Activated CD4-positive, alpha-beta memory T cell treated with anti-CD3 and anti-CD28 coated beads, Interleukin-2, amount 10 ng/mL, durations not matched to agents 7 days and 5 days (primary cell): ENCODE measurements at regions of chr6 and their contacts with region 1.

Region 1: DNA sequence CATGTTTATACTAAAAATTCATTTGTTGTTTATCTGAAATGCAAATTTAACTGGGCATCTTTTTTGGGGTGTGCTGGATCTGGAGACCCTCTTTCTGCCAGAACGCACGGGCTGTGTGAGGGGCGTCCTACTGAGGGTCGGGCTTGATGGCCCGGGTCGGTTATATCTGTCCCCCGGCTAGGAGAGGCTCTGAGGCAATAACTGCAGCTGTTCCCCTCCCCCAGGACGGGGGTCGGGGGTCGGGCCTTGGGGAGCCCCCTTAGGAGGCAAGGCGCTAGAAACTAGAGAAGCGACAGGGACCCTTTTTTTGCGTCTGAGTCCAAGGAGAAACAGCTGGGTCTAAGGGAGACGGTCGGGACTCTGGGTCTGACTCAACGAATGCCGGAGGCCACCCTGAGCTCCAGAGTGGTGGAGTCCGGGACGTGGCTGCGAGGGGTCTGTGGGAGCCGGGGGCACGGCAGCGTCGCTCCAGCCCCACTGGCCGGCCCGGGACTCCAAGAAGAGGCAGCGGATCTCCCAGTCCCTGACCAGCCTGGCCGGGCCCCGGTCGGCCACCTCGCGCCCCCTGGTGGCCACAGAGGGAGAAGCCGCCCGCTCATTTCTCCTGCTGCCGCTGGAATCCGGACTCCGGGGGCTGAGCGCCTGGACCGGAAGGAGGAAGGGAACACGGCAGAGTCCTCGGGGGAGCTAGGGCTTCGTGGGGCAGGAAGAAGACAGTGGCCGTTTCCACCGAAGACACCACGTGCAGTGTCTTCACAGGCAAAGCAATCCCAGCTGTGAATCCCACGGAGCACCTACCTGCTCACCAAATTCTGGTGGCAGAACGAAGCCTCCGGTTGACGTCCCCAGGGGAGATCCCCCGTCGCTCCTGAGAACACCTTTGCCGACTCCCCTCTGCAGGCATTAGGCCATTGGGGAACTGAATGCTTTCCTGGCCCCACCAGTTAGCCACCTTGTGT is 24.0 kb upstream of the SCML4 start:
- DNase-seq: peak; percentile 78
- H3K4me3 Mint-ChIP-seq: peak overlapping the region; percentile 67
- H3K27ac Mint-ChIP-seq: no peak overlapping the region
- H3K4me1 Mint-ChIP-seq: peaks cover 14% of the 10 kb centered on the region
- H3K27me3 Mint-ChIP-seq: peaks cover 15% of the 10 kb centered on the region

Region 2: DNA sequence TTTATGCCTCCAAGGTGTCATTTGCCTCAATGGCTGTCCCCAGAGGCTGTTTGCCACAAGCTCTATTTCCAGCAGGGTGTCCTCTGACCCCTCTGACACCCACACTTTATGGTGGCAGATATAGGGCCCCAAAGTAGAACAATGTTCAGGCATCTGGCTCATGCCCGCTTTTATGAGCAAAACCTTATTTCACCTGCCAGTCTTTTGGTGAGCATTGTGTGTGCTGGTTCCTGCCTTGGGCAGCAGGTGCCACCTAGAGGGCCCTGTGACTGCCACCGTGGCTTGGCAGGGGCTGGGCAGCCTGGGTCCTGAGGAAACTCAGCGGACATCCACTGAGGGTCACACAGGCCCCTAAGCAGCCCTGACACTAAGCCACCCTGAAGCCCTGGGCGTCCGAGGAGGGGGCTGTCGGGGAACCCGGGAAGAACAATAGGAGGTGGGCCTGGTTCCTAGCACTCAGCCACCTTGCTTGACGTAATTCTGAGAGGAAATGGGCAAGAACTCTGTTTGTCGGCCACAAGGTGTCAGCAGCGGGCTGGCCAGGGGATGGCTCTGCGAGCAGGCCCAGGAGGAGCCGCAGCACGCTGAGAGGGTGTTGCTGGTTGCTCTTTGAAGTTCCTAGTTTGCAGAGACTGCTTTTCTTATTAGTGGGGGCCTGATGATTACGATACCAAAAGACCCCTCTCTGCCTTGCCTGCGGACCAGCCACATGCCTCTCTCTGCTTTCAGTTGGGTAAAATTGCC is 173.0 kb before region 1 on chr6:
- CTCF ChIA-PET with region 1: interaction called, 73 read pairs
- POLR2A ChIA-PET with region 1: no interaction called
- DNase-seq: peak; percentile 89
- H3K4me3 Mint-ChIP-seq: no peak overlapping the region
- H3K27ac Mint-ChIP-seq: peak overlapping the region; percentile 50
- H3K4me1 Mint-ChIP-seq: peaks cover 21% of the 10 kb centered on the region
- H3K27me3 Mint-ChIP-seq: peaks cover 2% of the 10 kb centered on the region

Region 3: DNA sequence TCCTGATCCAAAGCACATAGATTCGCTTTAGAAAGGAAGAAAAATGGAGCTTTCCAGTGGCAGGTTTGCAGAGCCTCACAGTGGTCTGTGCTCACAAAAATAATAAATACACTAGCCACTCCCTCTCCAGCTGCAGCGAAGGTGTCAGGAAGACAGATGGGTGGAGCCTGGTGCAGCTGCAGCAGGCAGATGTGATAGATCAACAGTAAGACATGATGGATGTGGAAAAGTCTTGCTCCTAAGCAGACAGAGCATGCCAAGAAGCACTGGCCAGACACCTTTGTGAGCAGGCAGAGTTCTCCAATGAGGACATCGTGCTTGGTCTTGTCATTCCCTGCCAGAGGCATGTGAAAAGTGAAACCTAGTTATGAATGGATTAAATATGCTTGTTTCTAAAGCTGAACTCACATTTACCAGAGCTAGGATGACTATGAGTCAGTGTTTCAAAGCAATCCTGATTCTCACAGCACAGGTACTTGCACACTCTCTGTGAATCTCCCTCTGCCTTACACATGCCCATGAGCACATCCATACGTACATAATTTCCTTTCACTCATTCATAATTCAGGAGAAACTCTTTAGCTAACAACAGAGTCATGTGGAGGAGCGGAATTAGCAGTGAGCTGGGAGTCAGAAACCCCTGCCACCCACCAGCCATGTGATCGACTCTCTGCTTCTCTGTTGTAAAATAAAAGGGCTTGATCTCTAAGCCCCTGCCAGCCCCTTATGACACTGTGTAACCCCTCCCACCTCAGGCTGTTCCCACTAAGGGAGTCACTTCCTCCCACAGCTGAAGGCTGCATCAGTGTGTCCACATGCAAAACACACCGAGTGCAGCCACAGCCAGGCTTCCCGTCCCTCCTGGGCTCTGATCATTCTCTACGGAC is 135.2 kb before region 1 on chr6:
- CTCF ChIA-PET with region 1: interaction called, 20 read pairs
- POLR2A ChIA-PET with region 1: no interaction called
- DNase-seq: peak; percentile 34
- H3K4me3 Mint-ChIP-seq: peak overlapping the region; percentile 21
- H3K27ac Mint-ChIP-seq: peak overlapping the region; percentile 65
- H3K4me1 Mint-ChIP-seq: peaks cover 59% of the 10 kb centered on the region
- H3K27me3 Mint-ChIP-seq: no peaks in the 10 kb centered on the region

Region 4: DNA sequence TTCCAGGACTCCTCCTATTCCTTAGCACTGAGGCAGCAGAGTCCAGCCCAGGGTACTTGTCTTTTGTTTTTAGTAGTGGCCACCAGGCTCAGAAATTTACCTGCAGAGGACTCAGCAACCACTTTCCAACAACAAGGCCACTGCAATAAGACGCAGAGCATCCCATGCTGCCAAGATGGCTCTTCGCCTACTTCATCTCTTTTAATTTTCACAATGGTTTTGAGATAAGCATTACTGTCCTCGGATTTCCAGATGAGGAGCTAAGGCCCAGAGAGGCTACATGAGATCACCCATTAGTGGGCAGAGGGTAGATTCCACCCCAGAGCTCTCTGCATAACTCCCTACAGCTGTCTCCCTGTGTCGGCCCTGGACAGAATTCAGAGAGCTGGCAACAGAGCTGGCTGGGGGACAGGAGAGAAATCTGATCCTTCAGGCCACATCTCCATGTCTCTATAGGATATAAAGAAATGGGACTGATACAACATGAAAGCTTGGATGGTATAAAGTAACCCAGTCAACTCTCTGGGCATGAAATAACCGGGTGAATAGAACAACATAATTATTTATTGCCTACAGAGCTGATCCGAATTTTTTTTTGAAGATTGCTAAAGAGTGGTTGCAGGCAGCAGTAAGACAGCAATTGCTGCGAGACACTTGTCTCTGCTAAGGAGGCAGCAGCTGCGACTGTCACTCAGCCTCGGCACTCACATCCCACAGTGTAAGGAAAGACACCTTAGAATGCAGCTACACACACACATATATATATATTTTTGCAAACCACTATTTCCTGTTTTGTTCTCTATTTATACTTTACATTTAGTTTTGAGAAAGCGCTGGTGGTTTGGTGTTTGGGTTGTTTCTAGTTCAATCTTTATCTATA is 61.2 kb before region 1 on chr6:
- CTCF ChIA-PET with region 1: interaction called, 10 read pairs
- POLR2A ChIA-PET with region 1: interaction called, 4 read pairs
- DNase-seq: peak; percentile 61
- H3K4me3 Mint-ChIP-seq: peak overlapping the region; percentile 54
- H3K27ac Mint-ChIP-seq: peak overlapping the region; percentile 82
- H3K4me1 Mint-ChIP-seq: peaks cover 45% of the 10 kb centered on the region
- H3K27me3 Mint-ChIP-seq: peaks cover 2% of the 10 kb centered on the region

Region 5: DNA sequence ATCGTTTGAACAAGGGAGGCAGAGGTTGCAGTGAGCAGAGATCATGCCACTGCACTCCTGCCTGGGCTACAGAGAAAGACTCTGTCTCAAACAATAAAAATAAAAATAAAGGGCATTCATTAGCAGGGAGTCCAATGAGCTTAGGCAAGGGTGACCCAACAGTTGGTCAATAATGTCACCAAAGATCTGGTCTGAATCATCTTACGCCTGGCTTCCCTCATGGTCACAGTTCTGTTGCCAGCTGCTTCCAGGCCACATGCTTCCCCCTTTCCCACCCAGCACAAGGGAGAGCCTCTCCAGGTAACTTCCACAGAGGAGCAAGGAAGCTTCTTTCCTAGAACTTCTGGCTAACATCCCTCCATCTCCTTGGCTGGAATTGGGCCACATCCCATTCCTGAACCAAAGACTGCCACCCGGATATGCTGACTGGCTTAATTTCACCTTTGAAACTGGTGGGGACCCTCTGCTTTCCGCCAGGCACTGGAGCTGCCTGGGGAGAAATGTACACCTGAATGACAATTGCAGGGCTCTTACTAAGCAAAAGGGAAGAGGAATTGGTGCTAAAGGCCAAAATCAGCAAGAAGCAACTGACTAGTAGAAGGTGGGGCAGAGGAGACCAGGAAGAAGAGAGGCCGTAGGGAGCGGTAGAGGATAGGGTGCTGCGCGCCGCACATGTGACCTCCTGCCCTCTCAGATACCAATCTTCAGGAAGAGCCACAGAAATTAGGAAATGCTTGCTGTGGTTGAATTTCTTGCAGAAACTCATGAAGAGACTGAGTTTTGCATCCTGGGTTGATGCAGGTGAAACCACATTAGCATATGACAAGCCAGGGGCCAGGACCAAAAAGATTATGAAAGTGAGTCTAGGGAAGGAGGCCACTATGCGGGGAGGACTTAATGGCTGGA is 15.7 kb before region 1 on chr6:
- CTCF ChIA-PET with region 1: interaction called, 26 read pairs
- POLR2A ChIA-PET with region 1: interaction called, 4 read pairs
- DNase-seq: no peak
- H3K4me3 Mint-ChIP-seq: no peak overlapping the region
- H3K27ac Mint-ChIP-seq: no peak overlapping the region
- H3K4me1 Mint-ChIP-seq: peaks cover 11% of the 10 kb centered on the region
- H3K27me3 Mint-ChIP-seq: peaks cover 2% of the 10 kb centered on the region